Posterior vena cava (tissue), 2 donors: ENCODE measurements at regions of chr19 and their contacts with region 1.

Region 1: DNA sequence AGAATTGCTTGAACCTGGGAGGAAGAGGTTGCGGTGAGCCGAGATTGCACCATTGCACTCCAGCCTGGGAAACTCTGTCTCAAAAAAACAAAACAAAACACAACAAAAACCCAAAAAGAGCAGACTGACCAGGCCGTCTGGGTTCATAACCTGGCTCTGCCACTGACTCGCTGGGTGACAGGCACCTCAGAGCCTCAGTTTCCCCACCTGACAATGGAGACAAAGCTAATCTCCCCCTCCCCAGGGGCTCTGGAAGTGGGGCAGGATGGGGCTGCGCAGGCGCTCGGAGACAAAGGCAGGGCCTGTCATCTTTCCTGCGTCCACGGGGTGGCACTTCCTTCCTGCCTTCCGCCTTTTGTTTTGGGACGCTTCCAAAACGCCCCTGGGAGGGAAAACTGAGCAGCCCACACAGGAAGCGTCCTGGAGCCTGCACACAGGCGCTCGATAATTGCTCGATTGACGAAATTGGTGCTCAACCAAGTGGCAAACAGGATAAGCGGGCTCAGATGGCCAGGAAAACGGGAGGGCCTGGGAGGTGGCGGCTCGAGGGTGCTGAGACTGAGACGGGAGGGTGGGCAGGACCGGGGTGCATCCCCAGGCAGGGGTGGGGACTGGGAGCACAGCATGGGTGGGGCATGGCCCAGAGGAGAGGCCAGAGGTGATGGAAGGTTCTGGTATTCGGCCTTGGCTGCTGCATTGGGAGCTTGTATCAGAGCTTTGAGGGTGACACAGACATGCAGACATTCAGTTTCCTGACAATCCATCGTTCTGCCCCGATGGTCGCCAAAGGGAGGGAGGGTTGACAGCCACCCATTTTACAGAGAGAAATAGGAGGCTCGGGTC is 17.8 kb downstream of the SPC24 start:
- DNase-seq: peak; percentile 94

Region 2: DNA sequence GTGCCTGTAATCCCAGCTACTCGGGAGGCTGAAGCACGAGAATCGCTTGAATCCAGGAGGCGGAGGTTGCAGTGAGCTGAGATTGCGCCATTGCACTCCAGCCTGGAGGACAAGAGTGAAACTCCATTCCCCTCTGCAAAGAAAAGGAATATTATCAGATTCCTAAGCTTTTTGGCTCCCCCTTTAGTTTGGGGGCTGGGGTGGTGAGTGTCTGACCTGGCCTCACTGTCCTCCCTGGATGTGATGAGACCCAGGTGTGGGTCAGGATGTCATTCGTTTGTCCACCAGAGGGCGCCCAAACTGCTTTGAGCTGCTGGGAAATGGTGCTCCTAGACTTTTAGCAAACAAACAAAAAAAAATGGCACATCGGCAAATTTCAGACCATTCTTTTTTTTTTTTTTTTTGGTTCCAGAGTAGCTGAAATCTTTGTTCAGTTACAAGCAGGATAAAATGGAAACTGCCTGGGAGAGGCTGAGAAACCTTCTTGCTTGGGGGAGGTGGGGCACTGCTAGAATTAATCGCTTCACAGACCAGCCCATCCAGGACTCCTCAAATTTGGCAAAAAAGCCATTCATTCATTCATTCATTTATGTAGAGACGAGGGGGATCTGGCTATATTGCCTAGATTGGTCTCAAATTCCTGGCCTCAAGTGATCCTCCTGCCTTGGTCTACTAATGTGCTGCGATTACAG is 11.6 kb before region 1 on chr19:
- intact Hi-C with region 1: no loop called
- DNase-seq: peak; percentile 93

Region 3: DNA sequence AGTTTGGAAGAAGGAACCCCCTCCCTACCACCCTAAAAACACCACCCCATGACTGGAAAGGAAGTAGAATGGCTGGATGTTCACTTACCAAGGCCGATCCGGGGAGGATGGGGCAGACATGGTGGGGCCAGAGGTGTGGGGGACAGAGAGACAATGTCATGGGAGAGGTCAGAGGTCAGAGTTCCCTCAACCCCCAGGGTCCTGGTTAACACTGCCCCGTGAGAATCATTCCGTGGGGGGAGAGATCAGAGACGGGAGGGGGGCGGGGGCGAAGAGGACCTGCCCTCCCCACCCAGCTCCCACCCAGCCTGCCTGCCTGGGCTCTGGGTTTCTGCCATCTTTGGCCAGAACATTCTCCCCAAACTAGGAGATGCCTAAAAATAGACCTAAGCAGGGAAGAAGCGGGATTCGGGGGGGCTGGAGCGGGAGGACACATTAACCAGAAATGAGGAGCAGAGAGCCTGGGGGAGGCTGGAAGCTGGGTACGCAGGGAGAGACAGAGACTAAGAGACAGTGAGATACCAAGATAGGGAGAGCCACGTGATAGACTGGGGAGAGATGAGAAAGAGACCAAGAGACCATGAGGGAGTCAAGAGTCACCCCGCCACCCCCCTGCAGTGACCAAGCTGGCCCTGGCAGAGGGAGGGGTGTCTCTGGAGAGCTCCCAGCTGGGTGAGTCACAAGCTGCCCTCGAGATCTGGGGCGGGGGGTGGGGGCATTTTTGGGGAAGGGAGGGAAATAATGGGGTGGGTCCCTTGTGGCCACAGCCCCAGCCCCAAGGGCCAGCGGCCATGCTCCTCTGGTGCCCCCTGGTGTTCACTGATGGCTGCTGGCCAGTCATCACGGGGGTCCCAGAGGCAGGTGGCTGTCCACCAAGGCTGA is 65.7 kb after region 1 on chr19:
- intact Hi-C with region 1: loop called (anchors 5 kb)
- DNase-seq: peak; percentile 93